Naive thymus-derived CD4-positive, alpha-beta T cell (primary cell): ENCODE measurements at regions of chr9 and their contacts with region 1.

Region 1: DNA sequence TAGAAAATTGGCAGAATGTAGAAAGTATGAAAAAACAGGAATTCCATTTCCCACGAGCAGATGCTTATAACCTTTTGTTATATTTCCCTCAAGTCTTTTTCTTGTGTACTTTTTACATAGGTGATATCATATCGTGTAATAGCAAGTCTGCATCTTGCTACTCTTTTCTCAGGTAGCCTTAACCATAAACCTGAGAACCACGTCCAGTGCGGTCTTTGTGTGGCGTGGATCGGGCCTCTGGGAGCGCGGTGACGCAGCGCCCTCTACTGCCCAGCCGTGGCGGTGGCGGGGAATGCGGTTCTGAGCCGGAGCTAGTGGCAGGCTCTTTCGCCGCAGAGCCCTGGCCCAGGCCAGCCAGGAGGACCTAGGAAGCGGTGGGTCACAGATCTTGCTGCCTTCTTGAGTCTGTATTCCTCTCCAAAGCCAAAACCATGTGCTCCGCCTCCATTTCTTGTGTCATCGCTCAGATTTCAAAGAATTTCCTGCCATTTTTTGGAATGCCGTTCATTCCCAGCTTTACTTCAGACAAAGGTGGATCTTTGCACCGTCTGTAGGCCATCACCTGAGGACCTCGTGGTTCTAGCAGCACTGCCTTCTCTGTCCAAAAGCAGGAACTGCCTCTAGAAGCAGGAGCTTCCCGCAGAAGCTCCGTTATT is 71.9 kb downstream of the MVB12B start:
- DNase-seq: peak; percentile 38 to 83 (median 62)
- ATAC-seq: peak; percentile 63
- H3K4me3 ChIP-seq: no peak overlapping the region
- H3K4me3 Mint-ChIP-seq: peak overlapping the region in 9 of 10 donors; percentile 31 to 77 (median 61)
- H3K27ac ChIP-seq: no peak overlapping the region
- H3K27ac Mint-ChIP-seq: peak overlapping the region in 8 of 9 donors; percentile 34 to 91 (median 66)
- H3K4me1 ChIP-seq: peaks cover 22 to 28% of the 10 kb centered on the region in 2 donors
- H3K4me1 Mint-ChIP-seq: peaks cover 20 to 57% (median 36%) of the 10 kb centered on the region in 7 donors
- H3K27me3 ChIP-seq: no peaks in the 10 kb centered on the region
- H3K27me3 Mint-ChIP-seq: peaks cover 0 to 16% (median 0%) of the 10 kb centered on the region in 5 donors

Region 2: GRCh38 chr9:124570937-124571680 is 1827.4 kb before region 1 on chr9:
- CTCF ChIA-PET with region 1: no interaction called
- POLR2A ChIA-PET with region 1: no interaction called
- intact Hi-C with region 1: no loop called
- DNase-seq: no peak
- ATAC-seq: no peak
- H3K4me3 ChIP-seq: no peak overlapping the region
- H3K4me3 Mint-ChIP-seq: no peak overlapping the region
- H3K27ac ChIP-seq: no peak overlapping the region
- H3K27ac Mint-ChIP-seq: no peak overlapping the region
- H3K4me1 ChIP-seq: no peaks in the 10 kb centered on the region
- H3K4me1 Mint-ChIP-seq: no peaks in the 10 kb centered on the region
- H3K27me3 ChIP-seq: no peaks in the 10 kb centered on the region
- H3K27me3 Mint-ChIP-seq: peaks cover 0 to 19% (median 4%) of the 10 kb centered on the region in 5 donors

Region 3: DNA sequence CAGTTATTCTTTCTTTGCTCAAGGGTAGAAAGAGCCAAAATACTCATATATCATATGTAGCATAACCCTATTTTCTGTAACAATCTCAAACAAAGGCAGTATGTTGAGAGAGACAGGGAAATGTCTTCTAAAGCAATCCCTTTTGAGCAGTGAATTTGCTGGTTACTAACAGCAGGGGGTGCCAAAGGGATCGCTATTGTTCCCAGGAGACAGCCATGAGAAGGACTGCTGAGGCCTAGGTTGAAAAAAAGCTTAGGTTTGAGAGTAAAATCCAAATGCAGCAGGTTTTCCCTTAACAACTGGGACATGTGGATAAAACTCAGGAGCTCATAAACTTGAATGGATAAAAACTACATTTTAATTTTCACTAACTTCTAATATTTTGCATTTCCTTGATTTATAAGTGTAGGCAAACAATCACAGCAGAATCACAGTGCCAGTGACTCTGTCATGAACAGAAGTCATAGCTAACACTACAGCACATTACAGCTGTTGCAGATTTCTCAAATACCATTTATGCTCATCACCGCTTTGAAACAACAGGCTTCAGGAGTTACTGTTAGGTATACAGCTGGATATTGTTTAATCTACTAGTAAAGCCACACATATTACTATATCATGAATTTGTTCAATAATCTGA is 840.0 kb before region 1 on chr9:
- CTCF ChIA-PET with region 1: no interaction called
- POLR2A ChIA-PET with region 1: no interaction called
- intact Hi-C with region 1: loop called in 1 of 2 experiments (anchors 5 kb)
- DNase-seq: peak in 8 of 9 donors; percentile 18 to 63 (median 55)
- ATAC-seq: peak; percentile 78
- H3K4me3 ChIP-seq: no peak overlapping the region
- H3K4me3 Mint-ChIP-seq: no peak overlapping the region
- H3K27ac ChIP-seq: no peak overlapping the region
- H3K27ac Mint-ChIP-seq: peak overlapping the region in 1 of 9 donors; percentile 28
- H3K4me1 ChIP-seq: no peaks in the 10 kb centered on the region
- H3K4me1 Mint-ChIP-seq: peaks cover 0 to 19% (median 11%) of the 10 kb centered on the region in 7 donors
- H3K27me3 ChIP-seq: no peaks in the 10 kb centered on the region
- H3K27me3 Mint-ChIP-seq: no peaks in the 10 kb centered on the region

Region 4: DNA sequence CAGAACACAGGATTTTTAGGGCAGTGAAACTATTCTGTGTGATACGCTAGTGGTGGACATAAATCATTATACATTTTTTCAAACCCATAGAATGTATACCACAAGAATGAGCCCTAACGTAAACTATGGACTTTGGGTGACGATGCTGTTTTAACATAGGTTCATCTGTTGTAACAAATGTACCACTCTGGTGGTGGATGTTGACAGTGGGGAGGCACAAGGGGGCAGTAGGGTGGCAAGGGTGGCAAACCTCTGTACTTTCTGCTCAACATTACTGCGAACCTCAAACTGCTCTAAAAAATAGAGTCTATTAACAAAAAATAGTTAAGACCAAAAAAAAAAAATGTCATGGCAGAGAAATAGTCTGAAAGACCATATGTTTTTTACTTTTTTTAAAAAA is 81.0 kb before region 1 on chr9:
- CTCF ChIA-PET with region 1: interaction called, 13 read pairs
- POLR2A ChIA-PET with region 1: no interaction called
- intact Hi-C with region 1: loop called in 1 of 2 experiments (anchors 1 kb)
- DNase-seq: peak in 6 of 9 donors; percentile 22 to 57 (median 49)
- ATAC-seq: peak; percentile 81
- H3K4me3 ChIP-seq: no peak overlapping the region
- H3K4me3 Mint-ChIP-seq: no peak overlapping the region
- H3K27ac ChIP-seq: no peak overlapping the region
- H3K27ac Mint-ChIP-seq: no peak overlapping the region
- H3K4me1 ChIP-seq: peaks cover 0 to 9% of the 10 kb centered on the region in 2 donors
- H3K4me1 Mint-ChIP-seq: peaks cover 0 to 13% (median 3%) of the 10 kb centered on the region in 7 donors
- H3K27me3 ChIP-seq: no peaks in the 10 kb centered on the region
- H3K27me3 Mint-ChIP-seq: peaks cover 0 to 29% (median 0%) of the 10 kb centered on the region in 5 donors

Region 5: GRCh38 chr9:126411225-126411947 is 12.9 kb after region 1 on chr9:
- CTCF ChIA-PET with region 1: interaction called, 5 read pairs
- POLR2A ChIA-PET with region 1: interaction called, 3 read pairs
- intact Hi-C with region 1: loop called (anchors 1 kb)
- DNase-seq: peak in 7 of 9 donors; percentile 64 to 88 (median 78)
- ATAC-seq: peak; percentile 90
- H3K4me3 ChIP-seq: peak overlapping the region; percentile 57
- H3K4me3 Mint-ChIP-seq: peak overlapping the region; percentile 70 to 88 (median 83)
- H3K27ac ChIP-seq: peak overlapping the region; percentile 64
- H3K27ac Mint-ChIP-seq: peak overlapping the region; percentile 80 to 95 (median 89)
- H3K4me1 ChIP-seq: peaks cover 24 to 27% of the 10 kb centered on the region in 2 donors
- H3K4me1 Mint-ChIP-seq: peaks cover 31 to 54% (median 45%) of the 10 kb centered on the region in 7 donors
- H3K27me3 ChIP-seq: no peaks in the 10 kb centered on the region
- H3K27me3 Mint-ChIP-seq: peaks cover 0 to 2% (median 0%) of the 10 kb centered on the region in 5 donors